ENCODE measurements at regions of chr2 and their contacts with region 1.

Region 1: DNA sequence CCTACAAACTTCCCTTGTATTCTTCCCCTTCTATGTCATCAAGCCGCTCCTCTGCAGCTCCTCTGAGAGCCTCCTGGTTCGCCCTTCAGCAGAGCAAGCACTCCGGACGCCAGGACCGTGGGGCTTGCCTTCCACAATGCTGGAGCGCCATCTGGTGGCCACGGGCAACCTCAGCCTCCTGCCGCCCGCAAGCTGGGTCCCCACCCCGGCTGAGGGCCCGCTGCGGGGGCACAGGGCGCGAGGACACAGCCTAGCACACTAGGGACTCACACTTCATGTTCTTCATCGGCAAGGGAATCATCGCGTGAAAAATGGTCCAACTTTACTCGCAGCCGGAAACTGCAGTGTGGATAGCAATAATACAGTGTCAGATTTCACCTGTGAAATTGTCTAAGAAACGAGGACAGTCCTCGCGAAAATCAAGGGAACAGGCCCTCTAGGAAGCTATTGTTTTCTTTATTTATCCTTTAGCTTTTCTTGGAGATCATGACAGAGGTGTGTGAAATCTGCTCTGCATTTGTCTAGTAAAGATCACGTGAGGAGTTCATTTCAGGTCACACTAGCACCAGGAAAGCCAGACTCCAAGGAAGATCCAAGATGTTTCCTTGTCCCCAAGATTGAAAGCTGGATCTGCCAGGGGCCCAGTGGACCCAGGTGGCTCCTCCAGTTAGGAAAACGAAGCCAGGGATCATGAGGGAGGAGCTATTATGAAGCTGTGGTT is 5.8 kb downstream of the PRLH start:
- DNase-seq: peak; percentile 67 to 92 (median 85)
- ATAC-seq: peak; percentile 94
- H3K4me3 ChIP-seq: no peak overlapping the region
- H3K4me3 Mint-ChIP-seq: no peak overlapping the region
- H3K27ac ChIP-seq: no peak overlapping the region
- H3K27ac Mint-ChIP-seq: no peak overlapping the region
- H3K4me1 ChIP-seq: no peaks in the 10 kb centered on the region
- H3K4me1 Mint-ChIP-seq: peaks cover 3% of the 10 kb centered on the region
- H3K27me3 ChIP-seq: no peaks in the 10 kb centered on the region
- H3K27me3 Mint-ChIP-seq: peaks cover 11% of the 10 kb centered on the region
- CTCF ChIP-seq: peak; percentile 91

Region 2: GRCh38 chr2:236343400-236344161 is 1228.6 kb before region 1 on chr2:
- CTCF ChIA-PET with region 1: no interaction called
- POLR2A ChIA-PET with region 1: no interaction called
- intact Hi-C with region 1: loop called in 1 of 2 experiments (anchors 10 kb)
- DNase-seq: peak in 8 of 9 experiments; percentile 27 to 73 (median 47)
- ATAC-seq: peak; percentile 57
- H3K4me3 ChIP-seq: no peak overlapping the region
- H3K4me3 Mint-ChIP-seq: no peak overlapping the region
- H3K27ac ChIP-seq: no peak overlapping the region
- H3K27ac Mint-ChIP-seq: no peak overlapping the region
- H3K4me1 ChIP-seq: no peaks in the 10 kb centered on the region
- H3K4me1 Mint-ChIP-seq: no peaks in the 10 kb centered on the region
- H3K27me3 ChIP-seq: no peaks in the 10 kb centered on the region
- H3K27me3 Mint-ChIP-seq: peaks cover 5% of the 10 kb centered on the region
- CTCF ChIP-seq: peak; percentile 86

Region 3: GRCh38 chr2:237060534-237061312 is 511.5 kb before region 1 on chr2:
- CTCF ChIA-PET with region 1: no interaction called
- POLR2A ChIA-PET with region 1: no interaction called
- intact Hi-C with region 1: no loop called
- DNase-seq: peak in 3 of 9 experiments; percentile 11 to 56 (median 39)
- ATAC-seq: no peak
- H3K4me3 ChIP-seq: no peak overlapping the region
- H3K4me3 Mint-ChIP-seq: no peak overlapping the region
- H3K27ac ChIP-seq: no peak overlapping the region
- H3K27ac Mint-ChIP-seq: no peak overlapping the region
- H3K4me1 ChIP-seq: no peaks in the 10 kb centered on the region
- H3K4me1 Mint-ChIP-seq: no peaks in the 10 kb centered on the region
- H3K27me3 ChIP-seq: no peaks in the 10 kb centered on the region
- H3K27me3 Mint-ChIP-seq: no peaks in the 10 kb centered on the region
- CTCF ChIP-seq: peak; percentile 52

Region 4: DNA sequence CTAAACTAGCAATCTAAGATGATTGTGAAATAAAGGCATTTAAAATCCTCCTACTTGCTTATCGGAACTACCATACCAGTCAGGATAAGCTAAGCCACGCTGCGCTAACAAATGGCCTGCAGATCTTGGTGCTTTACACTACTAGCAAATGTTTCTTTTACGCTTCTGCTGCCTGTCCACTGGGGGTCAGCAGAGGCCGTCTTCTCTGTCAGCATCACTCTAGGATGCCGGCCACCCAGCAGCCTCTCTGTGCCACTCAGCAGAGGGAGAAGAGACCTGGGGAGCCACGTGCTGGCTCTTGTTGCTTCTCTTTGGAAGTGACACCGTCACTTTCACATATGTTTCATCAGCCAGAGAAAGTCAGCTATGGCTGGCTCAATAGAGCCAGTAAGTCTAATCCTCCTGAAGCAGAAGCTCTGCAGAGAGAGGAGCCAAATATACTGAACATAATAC is 449.9 kb before region 1 on chr2:
- CTCF ChIA-PET with region 1: interaction called, 10 read pairs
- POLR2A ChIA-PET with region 1: no interaction called
- intact Hi-C with region 1: loop called in 1 of 2 experiments (anchors 1 kb)
- DNase-seq: peak in 7 of 9 experiments; percentile 7 to 31 (median 17)
- ATAC-seq: peak; percentile 36
- H3K4me3 ChIP-seq: no peak overlapping the region
- H3K4me3 Mint-ChIP-seq: no peak overlapping the region
- H3K27ac ChIP-seq: no peak overlapping the region
- H3K27ac Mint-ChIP-seq: no peak overlapping the region
- H3K4me1 ChIP-seq: no peaks in the 10 kb centered on the region
- H3K4me1 Mint-ChIP-seq: no peaks in the 10 kb centered on the region
- H3K27me3 ChIP-seq: no peaks in the 10 kb centered on the region
- H3K27me3 Mint-ChIP-seq: peaks cover 2% of the 10 kb centered on the region
- CTCF ChIP-seq: no peak

Region 5: GRCh38 chr2:237154082-237154638 is 418.0 kb before region 1 on chr2:
- CTCF ChIA-PET with region 1: interaction called, 29 read pairs
- POLR2A ChIA-PET with region 1: no interaction called
- intact Hi-C with region 1: loop called in 1 of 2 experiments (anchors 1 kb)
- DNase-seq: peak in 8 of 9 experiments; percentile 34 to 75 (median 54)
- ATAC-seq: peak; percentile 81
- H3K4me3 ChIP-seq: no peak overlapping the region
- H3K4me3 Mint-ChIP-seq: no peak overlapping the region
- H3K27ac ChIP-seq: no peak overlapping the region
- H3K27ac Mint-ChIP-seq: no peak overlapping the region
- H3K4me1 ChIP-seq: peaks cover 14% of the 10 kb centered on the region
- H3K4me1 Mint-ChIP-seq: peaks cover 20% of the 10 kb centered on the region
- H3K27me3 ChIP-seq: no peaks in the 10 kb centered on the region
- H3K27me3 Mint-ChIP-seq: no peaks in the 10 kb centered on the region
- CTCF ChIP-seq: peak; percentile 59

Region 6: GRCh38 chr2:237603718-237604362 is 31.7 kb after region 1 on chr2:
- CTCF ChIA-PET with region 1: interaction called, 10 read pairs
- POLR2A ChIA-PET with region 1: no interaction called
- intact Hi-C with region 1: no loop called
- DNase-seq: peak; percentile 30 to 89 (median 65)
- ATAC-seq: peak; percentile 97
- H3K4me3 ChIP-seq: peak overlapping the region; percentile 23
- H3K4me3 Mint-ChIP-seq: peak overlapping the region; percentile 68
- H3K27ac ChIP-seq: peak overlapping the region; percentile 67 to 84
- H3K27ac Mint-ChIP-seq: peak overlapping the region; percentile 94
- H3K4me1 ChIP-seq: peaks cover 29% of the 10 kb centered on the region
- H3K4me1 Mint-ChIP-seq: peaks cover 26% of the 10 kb centered on the region
- H3K27me3 ChIP-seq: no peaks in the 10 kb centered on the region
- H3K27me3 Mint-ChIP-seq: no peaks in the 10 kb centered on the region
- CTCF ChIP-seq: no peak

Region 7: GRCh38 chr2:238030422-238031154 is 458.4 kb after region 1 on chr2:
- CTCF ChIA-PET with region 1: no interaction called
- POLR2A ChIA-PET with region 1: no interaction called
- intact Hi-C with region 1: no loop called
- DNase-seq: no peak
- ATAC-seq: no peak
- H3K4me3 ChIP-seq: no peak overlapping the region
- H3K4me3 Mint-ChIP-seq: no peak overlapping the region
- H3K27ac ChIP-seq: no peak overlapping the region
- H3K27ac Mint-ChIP-seq: no peak overlapping the region
- H3K4me1 ChIP-seq: no peaks in the 10 kb centered on the region
- H3K4me1 Mint-ChIP-seq: no peaks in the 10 kb centered on the region
- H3K27me3 ChIP-seq: no peaks in the 10 kb centered on the region
- H3K27me3 Mint-ChIP-seq: no peaks in the 10 kb centered on the region
- CTCF ChIP-seq: no peak

Region 8: DNA sequence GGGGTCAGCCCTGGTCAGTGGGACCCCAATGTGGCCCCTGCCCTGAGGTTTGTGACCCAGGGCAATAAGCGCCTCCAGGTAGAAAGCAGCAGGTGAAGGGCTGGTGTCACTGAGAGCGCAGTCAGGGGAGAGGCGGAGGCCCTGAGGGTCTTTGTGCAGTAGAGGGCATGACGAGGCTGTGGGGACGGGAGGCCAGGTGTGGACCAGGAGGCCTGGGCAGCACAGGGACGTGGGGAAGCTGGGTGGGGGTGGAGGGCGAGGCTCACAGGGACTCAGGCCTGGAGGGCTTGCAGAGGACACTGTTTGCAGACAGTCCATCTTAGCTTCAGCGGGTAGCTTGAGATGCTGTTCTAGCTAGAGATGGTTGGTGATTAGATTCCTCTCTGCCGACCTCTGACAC is 780.2 kb after region 1 on chr2:
- CTCF ChIA-PET with region 1: no interaction called
- POLR2A ChIA-PET with region 1: no interaction called
- intact Hi-C with region 1: no loop called
- DNase-seq: no peak
- ATAC-seq: no peak
- H3K4me3 ChIP-seq: no peak overlapping the region
- H3K4me3 Mint-ChIP-seq: no peak overlapping the region
- H3K27ac ChIP-seq: no peak overlapping the region
- H3K27ac Mint-ChIP-seq: no peak overlapping the region
- H3K4me1 ChIP-seq: no peaks in the 10 kb centered on the region
- H3K4me1 Mint-ChIP-seq: no peaks in the 10 kb centered on the region
- H3K27me3 ChIP-seq: no peaks in the 10 kb centered on the region
- H3K27me3 Mint-ChIP-seq: no peaks in the 10 kb centered on the region
- CTCF ChIP-seq: no peak